Esophagus squamous epithelium (tissue), 5 donors: ENCODE measurements at regions of chr15 and their contacts with region 1.

Region 1: GRCh38 chr15:99565299-99566156 is at the start of gene MEF2A:
- DNase-seq: peak; percentile 55
- H3K4me3 ChIP-seq: peak within 1 kb of the TSS; percentile 64 to 96 (median 82)
- H3K27ac ChIP-seq: peak within 1 kb of the TSS; percentile 96 to 99 (median 98)
- H3K4me1 ChIP-seq: peaks cover 7 to 48% (median 13%) of the 10 kb centered on the region in 3 donors
- H3K27me3 ChIP-seq: no peaks in the 10 kb centered on the region
- CTCF ChIP-seq: peak in 1 of 6 experiments; percentile 5
- POLR2A ChIP-seq: peak in 3 of 4 donors; percentile 46 to 94 (median 93)
- total RNA-seq, gene MEF2A: 16.9 to 47.5 (median 24.3) TPM

Region 2: GRCh38 chr15:99442252-99442897 is 123.2 kb before region 1 on chr15:
- intact Hi-C with region 1: loop called (anchors 10 kb)
- DNase-seq: no peak
- H3K4me3 ChIP-seq: peak overlapping the region in 1 of 4 donors; percentile 34
- H3K27ac ChIP-seq: peak overlapping the region; percentile 38 to 85 (median 66)
- H3K4me1 ChIP-seq: peaks cover 16 to 65% (median 41%) of the 10 kb centered on the region in 3 donors
- H3K27me3 ChIP-seq: no peaks in the 10 kb centered on the region
- CTCF ChIP-seq: no peak
- POLR2A ChIP-seq: no peak

Region 3: GRCh38 chr15:99454941-99455788 is 110.4 kb before region 1 on chr15:
- intact Hi-C with region 1: no loop called
- DNase-seq: no peak
- H3K4me3 ChIP-seq: peak overlapping the region in 1 of 4 donors; percentile 41
- H3K27ac ChIP-seq: peak overlapping the region; percentile 88 to 91 (median 88)
- H3K4me1 ChIP-seq: peaks cover 48 to 59% (median 49%) of the 10 kb centered on the region in 3 donors
- H3K27me3 ChIP-seq: no peaks in the 10 kb centered on the region
- CTCF ChIP-seq: peak in 2 of 6 experiments; percentile 9 to 25
- POLR2A ChIP-seq: peak in 1 of 4 donors; percentile 25

Region 4: GRCh38 chr15:99486371-99487336 is 78.9 kb before region 1 on chr15:
- intact Hi-C with region 1: no loop called
- DNase-seq: no peak
- H3K4me3 ChIP-seq: peak overlapping the region; percentile 20 to 64 (median 40)
- H3K27ac ChIP-seq: peak overlapping the region; percentile 68 to 84 (median 76)
- H3K4me1 ChIP-seq: peaks cover 20 to 27% (median 20%) of the 10 kb centered on the region in 3 donors
- H3K27me3 ChIP-seq: no peaks in the 10 kb centered on the region
- CTCF ChIP-seq: no peak
- POLR2A ChIP-seq: no peak